ENCODE measurements at regions of chr2 and their contacts with region 1.

Region 1: GRCh38 chr2:55026202-55026601 is 24.0 kb downstream of the RTN4 start:
- DNase-seq: no peak
- ATAC-seq: peak; percentile 20; the same call in 1 of the 2 replicates
- H3K4me3 Mint-ChIP-seq: no peak overlapping the region
- H3K27ac Mint-ChIP-seq: no peak overlapping the region
- H3K4me1 Mint-ChIP-seq: peaks cover 13% of the 10 kb centered on the region
- H3K27me3 Mint-ChIP-seq: no peaks in the 10 kb centered on the region
- CTCF ChIP-seq: no peak

Region 2: DNA sequence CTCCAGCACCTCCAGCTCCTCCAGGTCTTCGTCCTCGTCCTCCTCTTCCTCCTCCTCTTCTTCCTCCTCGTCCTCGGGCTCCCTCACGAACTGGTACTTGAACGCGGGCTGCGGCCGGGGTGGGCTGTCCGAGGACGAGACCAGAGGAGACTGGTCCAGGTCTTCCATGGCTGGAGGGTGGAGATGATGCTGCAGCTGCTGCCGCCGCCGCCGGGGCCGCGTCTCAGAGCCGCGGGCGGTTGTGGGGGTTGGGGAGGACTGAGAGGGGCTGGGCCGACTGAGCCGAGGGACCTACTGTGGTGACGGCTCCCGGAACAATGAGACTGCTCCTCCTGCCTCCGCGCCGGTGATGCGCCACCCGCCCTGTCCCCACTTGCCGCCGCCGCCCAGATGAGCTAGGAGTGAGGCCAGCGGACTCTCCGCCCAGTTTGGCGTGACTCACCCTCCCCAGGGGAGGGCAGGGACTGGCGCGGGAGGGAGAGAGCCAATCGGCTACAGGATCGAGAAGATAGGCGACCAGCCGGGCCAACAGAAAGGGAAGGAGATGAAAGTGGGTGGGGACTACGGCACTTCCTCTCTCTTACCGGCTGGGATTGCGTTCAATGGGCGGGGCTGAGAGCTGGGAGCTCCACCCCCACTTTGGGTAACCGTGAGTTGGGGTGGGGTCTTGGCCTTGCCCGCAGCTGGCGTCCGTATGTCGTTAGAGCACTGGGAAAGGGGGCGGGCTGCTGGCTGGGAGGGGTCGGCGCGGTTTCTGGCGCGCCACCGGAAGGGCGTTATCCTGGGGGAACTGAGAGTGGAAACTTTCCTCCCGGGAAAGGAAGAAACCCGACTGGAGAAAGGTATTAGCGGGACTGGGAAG is 24.2 kb after region 1 on chr2 and contains the start of gene RTN4:
- CTCF ChIA-PET with region 1: interaction called, 7 read pairs
- POLR2A ChIA-PET with region 1: interaction called, 10 read pairs
- DNase-seq: peak; percentile 99
- ATAC-seq: peak; percentile 91
- H3K4me3 Mint-ChIP-seq: peak within 1 kb of the TSS; percentile 99
- H3K27ac Mint-ChIP-seq: peak within 1 kb of the TSS; percentile 99
- H3K4me1 Mint-ChIP-seq: peaks cover 40% of the 10 kb centered on the region
- H3K27me3 Mint-ChIP-seq: no peaks in the 10 kb centered on the region
- CTCF ChIP-seq: no peak
- total RNA-seq, gene RTN4: 175 to 202 TPM (median 178 TPM) in 3 replicates

Region 3: DNA sequence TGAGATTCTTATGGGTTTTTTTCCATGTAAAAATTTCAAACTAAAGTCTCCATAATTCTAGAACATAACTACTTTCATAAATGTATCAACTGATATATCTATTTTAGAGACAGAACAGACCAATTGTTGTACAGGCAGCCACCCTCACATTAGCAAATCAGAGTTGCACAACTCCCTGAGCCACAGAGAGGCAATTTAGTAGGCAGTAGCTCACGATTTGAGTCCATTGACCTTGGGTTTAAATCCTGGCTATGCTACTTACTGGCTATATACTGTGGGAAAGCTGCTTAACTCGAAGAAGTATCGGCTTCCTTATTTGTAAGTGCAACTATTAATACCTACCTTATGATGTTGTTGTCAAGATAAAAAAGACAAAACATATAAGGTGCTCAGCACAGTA is 226.6 kb after region 1 on chr2:
- CTCF ChIA-PET with region 1: no interaction called
- POLR2A ChIA-PET with region 1: interaction called, 11 read pairs
- DNase-seq: no peak
- ATAC-seq: no peak
- H3K4me3 Mint-ChIP-seq: no peak overlapping the region
- H3K27ac Mint-ChIP-seq: no peak overlapping the region
- H3K4me1 Mint-ChIP-seq: no peaks in the 10 kb centered on the region
- H3K27me3 Mint-ChIP-seq: no peaks in the 10 kb centered on the region
- CTCF ChIP-seq: no peak